ENCODE measurements at regions of chr14 and their contacts with region 1.

Region 1: DNA sequence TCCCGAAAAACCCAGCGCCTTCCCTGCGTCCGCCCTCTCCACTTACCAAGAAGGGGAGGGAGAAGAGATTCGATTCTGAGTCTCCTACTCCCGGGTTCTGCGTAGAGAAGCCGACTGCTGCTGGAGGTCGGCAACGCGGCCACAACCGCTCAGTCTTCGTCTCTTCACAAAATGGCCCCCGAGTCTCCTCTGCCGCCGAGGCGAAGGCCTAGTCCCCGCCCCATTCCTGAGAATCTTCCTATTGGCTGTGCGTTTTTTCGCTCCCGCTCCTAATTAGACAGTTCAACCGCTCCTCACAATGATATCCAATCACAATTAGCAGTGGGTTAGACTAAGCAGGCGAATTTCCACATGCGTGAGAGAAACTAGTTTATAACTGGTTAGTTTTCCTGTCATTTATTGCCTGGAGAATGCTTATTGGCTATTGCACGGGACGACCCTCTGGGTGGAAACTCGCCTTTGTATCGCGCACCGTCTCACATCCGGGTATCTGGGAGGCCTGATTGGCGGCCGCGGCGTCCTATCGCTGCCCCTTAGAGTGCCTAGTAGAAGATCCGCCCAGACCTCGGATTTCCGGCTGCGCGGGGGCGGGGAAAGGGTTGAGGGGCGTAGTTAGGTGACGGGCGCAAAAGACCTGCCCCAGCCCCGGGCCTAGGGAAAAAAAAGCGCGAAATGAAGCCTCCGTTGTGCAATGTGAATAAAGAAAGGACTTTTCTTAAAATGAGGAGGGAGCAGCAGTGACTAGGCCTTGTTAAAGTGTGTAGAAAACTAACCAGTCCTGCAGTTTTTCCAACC is at the start of gene HNRNPC:
- DNase-seq: peak; percentile 100
- H3K4me3 Mint-ChIP-seq: peak within 1 kb of the TSS; percentile 100
- H3K27ac Mint-ChIP-seq: peak within 1 kb of the TSS; percentile 100
- H3K4me1 Mint-ChIP-seq: peaks cover 25% of the 10 kb centered on the region
- H3K27me3 Mint-ChIP-seq: no peaks in the 10 kb centered on the region
- total RNA-seq, gene HNRNPC: 1,252 to 1,377 TPM

Region 2: DNA sequence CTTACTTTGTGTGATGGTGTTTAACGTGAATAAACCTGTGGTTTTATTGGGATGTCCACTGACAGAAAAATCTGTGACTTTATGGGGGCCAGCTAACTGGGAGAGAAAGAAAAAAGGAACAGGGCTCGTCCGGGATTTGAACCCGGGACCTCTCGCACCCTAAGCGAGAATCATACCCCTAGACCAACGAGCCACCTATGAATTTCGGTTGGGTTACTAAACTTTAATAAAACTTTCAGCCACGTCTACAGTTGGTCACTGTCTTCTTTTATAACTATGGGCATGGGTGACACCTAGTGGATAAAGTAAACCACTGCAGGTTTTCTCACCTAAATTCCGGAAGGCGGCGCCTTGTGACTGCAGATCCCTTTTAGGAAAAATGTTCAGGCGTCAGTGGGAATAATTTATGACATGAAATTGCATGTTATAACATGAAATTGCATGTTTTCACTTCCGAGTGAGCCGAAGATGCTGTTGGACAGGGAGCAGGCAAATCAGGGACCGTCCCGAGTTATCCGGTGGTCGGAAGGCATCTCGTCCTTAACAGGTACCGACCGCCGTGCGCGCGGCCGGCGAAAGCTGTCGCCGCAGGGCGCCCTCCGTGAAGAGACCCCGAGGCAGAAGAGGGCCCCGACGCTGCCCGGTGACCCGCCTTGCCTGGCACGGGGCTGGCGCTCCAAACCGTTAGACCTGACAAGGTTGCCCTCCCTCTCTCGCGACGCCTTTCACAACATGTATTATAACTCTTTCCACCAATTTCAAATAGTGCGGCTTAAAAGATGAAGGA is 660.0 kb before region 1 on chr14:
- CTCF ChIA-PET with region 1: no interaction called
- intact Hi-C with region 1: no loop called
- DNase-seq: peak; percentile 71
- H3K4me3 Mint-ChIP-seq: no peak overlapping the region
- H3K27ac Mint-ChIP-seq: no peak overlapping the region
- H3K4me1 Mint-ChIP-seq: peaks cover under 1% of the 10 kb centered on the region
- H3K27me3 Mint-ChIP-seq: no peaks in the 10 kb centered on the region

Region 3: GRCh38 chr14:20682435-20683124 is 586.9 kb before region 1 on chr14:
- CTCF ChIA-PET with region 1: no interaction called
- intact Hi-C with region 1: loop called (anchors 2 kb)
- DNase-seq: peak; percentile 81
- H3K4me3 Mint-ChIP-seq: no peak overlapping the region
- H3K27ac Mint-ChIP-seq: no peak overlapping the region
- H3K4me1 Mint-ChIP-seq: peaks cover 22% of the 10 kb centered on the region
- H3K27me3 Mint-ChIP-seq: no peaks in the 10 kb centered on the region

Region 4: GRCh38 chr14:21241218-21241819 is 28.1 kb before region 1 on chr14:
- CTCF ChIA-PET with region 1: no interaction called
- intact Hi-C with region 1: loop called (anchors 1 kb)
- DNase-seq: no peak
- H3K4me3 Mint-ChIP-seq: no peak overlapping the region
- H3K27ac Mint-ChIP-seq: peak overlapping the region; percentile 74
- H3K4me1 Mint-ChIP-seq: peaks cover 76% of the 10 kb centered on the region
- H3K27me3 Mint-ChIP-seq: no peaks in the 10 kb centered on the region

Region 5: DNA sequence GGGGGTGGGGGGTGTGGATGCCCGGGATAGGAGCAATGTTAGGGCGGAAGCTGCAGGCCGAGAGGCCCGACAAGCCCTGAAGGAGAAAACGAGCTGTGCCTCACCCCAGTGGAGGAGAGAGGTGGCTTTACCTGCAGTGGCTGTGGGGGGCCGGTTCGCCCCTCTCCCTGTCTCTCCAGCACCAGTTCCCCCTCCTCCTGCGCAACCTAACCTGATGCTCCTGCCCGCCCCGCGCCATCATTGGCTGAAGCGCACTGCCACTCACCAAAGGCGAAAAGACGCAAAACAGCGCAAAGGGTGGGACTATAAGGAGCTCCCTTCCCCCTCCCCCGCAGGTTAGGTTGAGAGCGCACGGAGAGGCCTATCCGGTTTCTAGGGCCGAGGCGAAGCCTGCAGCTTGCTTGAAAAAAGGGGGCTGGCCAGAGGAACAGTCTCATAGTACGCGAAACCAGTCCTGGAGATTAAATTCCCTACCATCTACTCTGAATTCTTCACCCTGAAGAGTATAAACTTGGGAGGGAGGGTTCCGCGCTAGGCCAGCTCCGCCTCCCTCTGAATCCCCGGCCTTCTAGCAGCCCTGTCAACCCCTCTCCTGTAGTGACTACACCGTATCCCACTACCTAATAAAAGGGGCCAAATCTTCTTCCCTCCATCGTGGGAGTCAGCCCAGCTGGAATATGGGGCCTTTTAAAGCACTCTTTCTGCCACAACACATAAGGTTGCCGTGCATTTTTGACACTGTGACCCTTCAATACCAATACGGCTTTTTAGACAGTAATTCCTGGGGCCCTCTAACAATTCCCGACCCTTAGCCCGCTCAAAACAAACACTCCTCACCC is 167.8 kb after region 1 on chr14:
- CTCF ChIA-PET with region 1: no interaction called
- intact Hi-C with region 1: loop called (anchors 1 kb)
- DNase-seq: peak; percentile 100
- H3K4me3 Mint-ChIP-seq: peak overlapping the region; percentile 84
- H3K27ac Mint-ChIP-seq: peak overlapping the region; percentile 90
- H3K4me1 Mint-ChIP-seq: peaks cover 52% of the 10 kb centered on the region
- H3K27me3 Mint-ChIP-seq: no peaks in the 10 kb centered on the region

Region 6: GRCh38 chr14:21476925-21477681 is 207.7 kb after region 1 on chr14 and contains the starts of genes RAB2B and TOX4:
- CTCF ChIA-PET with region 1: no interaction called
- intact Hi-C with region 1: loop called (anchors 1 kb)
- DNase-seq: peak; percentile 97
- H3K4me3 Mint-ChIP-seq: peak within 1 kb of the TSS; percentile 100
- H3K27ac Mint-ChIP-seq: peak within 1 kb of the TSS; percentile 98
- H3K4me1 Mint-ChIP-seq: peaks cover 31% of the 10 kb centered on the region
- H3K27me3 Mint-ChIP-seq: no peaks in the 10 kb centered on the region
- total RNA-seq, gene RAB2B: 20.5 to 21.4 TPM
- total RNA-seq, gene TOX4: 57.4 to 58.6 TPM

Region 7: GRCh38 chr14:22531451-22532344 is 1262.2 kb after region 1 on chr14:
- CTCF ChIA-PET with region 1: no interaction called
- intact Hi-C with region 1: loop called (anchors 5 kb)
- DNase-seq: peak; percentile 65
- H3K4me3 Mint-ChIP-seq: peak overlapping the region; percentile 77
- H3K27ac Mint-ChIP-seq: peak overlapping the region; percentile 98
- H3K4me1 Mint-ChIP-seq: peaks cover 82% of the 10 kb centered on the region
- H3K27me3 Mint-ChIP-seq: no peaks in the 10 kb centered on the region

Region 8: GRCh38 chr14:23006544-23007419 is 1737.3 kb after region 1 on chr14:
- CTCF ChIA-PET with region 1: no interaction called
- intact Hi-C with region 1: loop called (anchors 5 kb)
- DNase-seq: peak; percentile 99
- H3K4me3 Mint-ChIP-seq: peak overlapping the region; percentile 96
- H3K27ac Mint-ChIP-seq: peak overlapping the region; percentile 98
- H3K4me1 Mint-ChIP-seq: peaks cover 36% of the 10 kb centered on the region
- H3K27me3 Mint-ChIP-seq: no peaks in the 10 kb centered on the region